AG04449 (cell line): ENCODE measurements at regions of chr1 and their contacts with region 1.

Region 1: GRCh38 chr1:35715568-35716002 is 3.1 kb downstream of the C1orf216 start:
- DNase-seq: no peak
- H3K4me3 ChIP-seq: peak overlapping the region; percentile 6; the same call in 1 of the 2 replicates
- CTCF ChIP-seq: peak; percentile 86

Region 2: GRCh38 chr1:35557292-35558063 is 158.1 kb before region 1 on chr1 and contains the starts of genes KIAA0319L and NCDN:
- CTCF ChIA-PET with region 1: interaction called, 21 read pairs
- POLR2A ChIA-PET with region 1: no interaction called
- DNase-seq: peak; percentile 86
- H3K4me3 ChIP-seq: peak within 1 kb of the TSS; percentile 97
- CTCF ChIP-seq: no peak

Region 3: DNA sequence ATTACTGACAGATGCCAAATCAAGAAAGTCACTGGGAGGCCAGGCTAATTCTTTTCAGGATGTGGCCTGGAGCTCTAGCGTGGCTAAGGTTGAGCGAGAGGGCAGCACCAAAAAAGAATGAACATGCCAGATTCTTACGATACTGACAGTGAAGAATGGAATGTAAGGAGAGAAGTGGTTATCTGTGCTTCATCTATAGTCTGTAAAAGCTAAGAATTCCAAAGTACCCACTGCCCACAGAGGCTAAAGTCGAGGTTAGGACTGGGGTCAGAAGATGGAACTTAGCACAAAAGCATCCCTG is 109.8 kb before region 1 on chr1:
- CTCF ChIA-PET with region 1: interaction called, 24 read pairs
- POLR2A ChIA-PET with region 1: no interaction called
- DNase-seq: peak; percentile 7
- H3K4me3 ChIP-seq: no peak overlapping the region
- CTCF ChIP-seq: no peak

Region 4: DNA sequence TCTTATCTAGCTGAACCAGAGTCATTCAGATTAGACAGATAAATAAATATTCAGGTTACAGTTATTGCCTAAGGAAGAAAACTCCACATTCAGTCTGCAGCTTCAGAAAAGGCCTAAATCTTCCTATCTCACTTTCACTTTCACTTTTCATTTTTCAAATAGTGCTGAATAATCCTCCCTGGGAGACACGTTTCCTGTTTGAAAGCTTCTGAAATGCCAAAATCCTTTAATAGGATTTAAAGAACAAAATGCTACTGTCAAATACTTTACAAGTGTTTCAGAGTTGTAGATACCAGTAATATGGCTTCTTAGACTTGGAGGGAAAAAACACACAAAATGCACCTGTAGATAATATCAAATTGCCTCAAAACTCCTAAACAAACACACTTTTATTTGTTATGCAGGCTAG is 78.2 kb before region 1 on chr1:
- CTCF ChIA-PET with region 1: interaction called, 17 read pairs
- POLR2A ChIA-PET with region 1: interaction called, 3 read pairs
- DNase-seq: no peak
- H3K4me3 ChIP-seq: peak overlapping the region; percentile 32
- CTCF ChIP-seq: no peak

Region 5: GRCh38 chr1:35683012-35683411 is 32.6 kb before region 1 on chr1:
- CTCF ChIA-PET with region 1: interaction called, 39 read pairs
- POLR2A ChIA-PET with region 1: no interaction called
- DNase-seq: no peak
- H3K4me3 ChIP-seq: no peak overlapping the region
- CTCF ChIP-seq: no peak

Region 6: GRCh38 chr1:35726450-35727433 is 11.2 kb after region 1 on chr1:
- CTCF ChIA-PET with region 1: interaction called, 212 read pairs
- POLR2A ChIA-PET with region 1: no interaction called
- DNase-seq: no peak
- H3K4me3 ChIP-seq: no peak overlapping the region
- CTCF ChIP-seq: peak; percentile 87

Region 7: DNA sequence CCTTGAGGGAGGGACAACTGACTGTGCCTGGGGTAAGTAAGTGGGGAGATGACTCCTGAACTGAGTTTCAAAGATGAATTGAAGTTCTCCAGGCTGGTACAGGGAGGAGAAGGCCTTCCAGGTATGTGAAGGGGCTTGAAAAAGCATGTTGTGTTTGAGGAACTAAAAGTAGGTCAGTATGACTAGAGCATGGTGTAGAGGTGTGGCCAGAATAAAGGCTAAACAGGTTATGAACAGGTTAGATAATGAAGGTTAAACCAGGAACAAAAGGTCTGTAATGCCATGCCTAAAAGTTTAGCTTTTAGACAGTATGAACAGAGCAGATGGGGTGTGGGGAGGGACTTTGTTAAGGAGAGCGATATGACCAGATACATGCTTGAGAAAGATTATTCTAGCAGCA is 61.5 kb after region 1 on chr1:
- CTCF ChIA-PET with region 1: interaction called, 20 read pairs
- POLR2A ChIA-PET with region 1: no interaction called
- DNase-seq: no peak
- H3K4me3 ChIP-seq: no peak overlapping the region
- CTCF ChIP-seq: no peak

Region 8: GRCh38 chr1:35795295-35795694 is 79.7 kb after region 1 on chr1:
- CTCF ChIA-PET with region 1: no interaction called
- POLR2A ChIA-PET with region 1: no interaction called
- DNase-seq: no peak
- H3K4me3 ChIP-seq: no peak overlapping the region
- CTCF ChIP-seq: no peak

Region 9: DNA sequence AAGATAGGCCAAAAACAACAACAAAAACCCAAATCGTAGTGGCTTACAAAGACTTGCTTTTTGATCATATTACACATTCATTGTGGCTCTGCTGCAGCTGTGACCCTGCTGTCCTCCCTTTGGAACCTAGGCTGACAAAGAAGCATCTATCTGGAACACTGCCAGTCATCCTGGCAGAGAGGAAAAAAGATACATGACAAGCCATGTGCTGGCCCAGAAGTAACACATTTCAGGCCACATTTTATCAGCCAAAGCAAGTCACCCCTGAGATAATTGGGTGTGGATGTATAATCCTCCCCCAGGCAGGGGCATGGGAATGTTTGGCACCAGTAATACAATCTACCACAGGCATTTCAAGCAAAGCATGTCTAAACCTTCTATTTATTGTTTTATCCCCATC is 130.2 kb after region 1 on chr1:
- CTCF ChIA-PET with region 1: no interaction called
- POLR2A ChIA-PET with region 1: no interaction called
- DNase-seq: no peak
- H3K4me3 ChIP-seq: no peak overlapping the region
- CTCF ChIP-seq: no peak